ENCODE measurements at regions of chr6 and their contacts with region 1.

Region 1: GRCh38 chr6:35642471-35643161 is 46.1 kb downstream of the FKBP5 start:
- DNase-seq: no peak
- ATAC-seq: no peak
- H3K4me3 ChIP-seq: no peak overlapping the region
- H3K27ac ChIP-seq: no peak overlapping the region
- H3K4me1 ChIP-seq: peaks cover 0 to 6% of the 10 kb centered on the region in 2 experiments; a peak in 2 of 5 replicates
- H3K27me3 ChIP-seq: no peaks in the 10 kb centered on the region
- CTCF ChIP-seq: no peak
- EP300 ChIP-seq: no peak
- POLR2A ChIP-seq: no peak
- RAD21 ChIP-seq: no peak

Region 2: DNA sequence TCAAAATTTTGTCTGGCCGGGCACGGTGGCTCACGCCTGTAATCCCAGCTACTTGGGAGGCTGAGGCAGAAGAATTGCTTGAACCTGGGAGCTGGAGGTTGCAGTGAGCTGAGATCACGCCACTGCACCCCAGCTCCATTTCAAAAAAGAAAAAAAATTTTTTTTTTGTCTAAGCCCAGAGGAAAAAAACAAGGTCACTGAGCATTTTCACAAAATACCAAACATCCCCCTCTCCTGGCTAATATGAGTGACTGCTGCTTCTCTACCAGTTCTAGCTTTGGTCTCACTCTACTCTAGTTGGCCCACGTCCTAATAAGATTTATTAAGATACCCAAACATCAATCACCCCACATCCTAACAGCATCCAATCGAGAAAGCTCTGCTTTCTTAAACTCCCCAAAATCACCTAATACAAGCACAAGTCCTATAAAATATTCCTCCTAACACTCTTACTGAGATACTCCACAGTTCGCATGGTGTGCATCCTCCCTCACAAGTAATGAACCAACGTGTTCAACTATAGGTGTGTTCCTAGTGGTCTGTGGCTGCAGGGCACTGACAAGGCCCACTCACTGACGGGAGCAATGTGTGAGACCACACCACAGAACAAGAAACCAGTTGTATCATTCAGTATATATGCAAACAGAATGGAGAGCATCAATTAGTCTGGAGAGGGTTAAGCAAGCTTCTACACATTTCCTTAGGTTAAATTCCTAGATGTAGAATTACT is 18.1 kb before region 1 on chr6:
- CTCF ChIA-PET with region 1: no interaction called
- POLR2A ChIA-PET with region 1: interaction called, 11 read pairs
- in situ Hi-C with region 1: no loop called
- intact Hi-C with region 1: no loop called
- DNase-seq: no peak
- ATAC-seq: peak; percentile 72
- H3K4me3 ChIP-seq: no peak overlapping the region
- H3K27ac ChIP-seq: no peak overlapping the region
- H3K4me1 ChIP-seq: no peaks in the 10 kb centered on the region
- H3K27me3 ChIP-seq: no peaks in the 10 kb centered on the region
- CTCF ChIP-seq: peak; percentile 19 to 29 (median 27); a peak in 2 of 6 replicates
- EP300 ChIP-seq: no peak
- POLR2A ChIP-seq: no peak
- RAD21 ChIP-seq: no peak

Region 3: GRCh38 chr6:35663447-35664235 is 21.0 kb after region 1 on chr6:
- CTCF ChIA-PET with region 1: no interaction called
- POLR2A ChIA-PET with region 1: interaction called, 11 read pairs
- in situ Hi-C with region 1: no loop called
- intact Hi-C with region 1: no loop called
- DNase-seq: no peak
- ATAC-seq: peak; percentile 66
- H3K4me3 ChIP-seq: no peak overlapping the region
- H3K27ac ChIP-seq: peak overlapping the region; percentile 18; the same call in 1 of the 3 replicates
- H3K4me1 ChIP-seq: peaks cover 10 to 20% of the 10 kb centered on the region in 2 experiments; a peak in 4 of 5 replicates
- H3K27me3 ChIP-seq: no peaks in the 10 kb centered on the region
- CTCF ChIP-seq: no peak
- EP300 ChIP-seq: no peak
- POLR2A ChIP-seq: no peak
- RAD21 ChIP-seq: no peak

Measured in K562 (cell line).